CD4-positive, alpha-beta T cell (primary cell): ENCODE measurements at regions of chr11 and their contacts with region 1.

Region 1: DNA sequence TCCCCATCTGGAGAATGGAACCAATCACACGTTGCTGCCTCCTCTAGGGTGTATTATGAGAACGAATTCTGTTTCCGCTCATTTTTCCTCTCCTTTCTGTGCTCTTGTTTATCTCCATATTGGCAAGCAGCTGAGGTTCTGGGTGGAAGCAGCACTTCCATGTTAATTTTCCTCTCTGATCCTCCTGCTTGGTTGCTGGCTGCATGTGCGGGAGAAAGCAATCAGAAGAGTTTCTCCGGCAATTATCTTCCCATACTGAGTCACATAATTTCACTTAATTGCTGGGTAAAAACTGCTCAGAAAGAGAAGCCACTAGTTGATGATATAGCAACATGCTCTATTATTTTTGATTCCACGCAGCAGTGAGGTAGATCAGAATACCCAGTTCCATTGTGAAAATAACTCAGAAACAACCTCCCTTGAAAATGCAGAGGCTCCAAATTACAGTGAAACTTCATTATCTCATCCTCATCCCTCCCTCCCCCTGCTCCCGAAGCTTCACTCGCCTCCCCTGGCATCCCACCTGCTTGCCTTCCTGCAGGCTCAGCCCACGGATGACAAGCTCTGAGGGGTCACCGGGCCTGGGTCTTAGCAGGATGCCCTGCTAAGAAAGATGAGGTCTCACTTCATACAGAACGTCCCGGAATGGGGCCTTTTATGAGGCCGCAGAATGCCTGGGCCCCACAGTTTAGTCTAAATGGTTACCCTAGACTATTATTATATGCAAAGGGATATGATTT is 20.4 kb downstream of the FXYD6 start:
- DNase-seq: no peak
- ATAC-seq: no peak
- H3K4me3 ChIP-seq: no peak overlapping the region
- H3K4me3 Mint-ChIP-seq: no peak overlapping the region
- H3K27ac ChIP-seq: no peak overlapping the region
- H3K27ac Mint-ChIP-seq: no peak overlapping the region
- H3K4me1 ChIP-seq: no peaks in the 10 kb centered on the region
- H3K4me1 Mint-ChIP-seq: no peaks in the 10 kb centered on the region
- H3K27me3 ChIP-seq: no peaks in the 10 kb centered on the region
- H3K27me3 Mint-ChIP-seq: peaks cover 9% of the 10 kb centered on the region
- CTCF ChIP-seq: no peak

Region 2: DNA sequence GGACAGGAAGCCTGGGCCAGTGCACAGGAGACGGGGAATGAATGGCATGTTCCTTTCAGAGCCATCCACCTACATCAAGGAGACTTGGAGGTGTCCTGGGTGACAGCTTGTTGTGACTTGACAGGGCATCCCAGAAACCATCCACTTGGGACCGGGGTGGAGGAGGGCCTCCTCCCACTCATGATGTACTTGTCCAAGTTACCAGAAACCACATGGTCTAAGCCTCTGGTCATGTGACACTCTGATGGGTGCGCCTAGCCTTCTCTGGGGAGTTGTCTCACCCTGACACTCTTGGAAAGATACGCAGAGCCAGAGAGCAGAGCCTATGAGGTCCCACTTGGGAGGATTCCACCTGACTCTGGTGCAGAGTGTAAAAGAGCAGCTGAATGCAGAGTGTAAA is 42.0 kb after region 1 on chr11:
- CTCF ChIA-PET with region 1: no interaction called
- POLR2A ChIA-PET with region 1: no interaction called
- intact Hi-C with region 1: loop called in 1 of 2 experiments (anchors 5 kb)
- DNase-seq: peak in 1 of 14 experiments; percentile 23
- ATAC-seq: no peak
- H3K4me3 ChIP-seq: no peak overlapping the region
- H3K4me3 Mint-ChIP-seq: no peak overlapping the region
- H3K27ac ChIP-seq: no peak overlapping the region
- H3K27ac Mint-ChIP-seq: no peak overlapping the region
- H3K4me1 ChIP-seq: peaks cover 6% of the 10 kb centered on the region
- H3K4me1 Mint-ChIP-seq: no peaks in the 10 kb centered on the region
- H3K27me3 ChIP-seq: peaks cover 0 to 5% of the 10 kb centered on the region in 2 experiments
- H3K27me3 Mint-ChIP-seq: no peaks in the 10 kb centered on the region
- CTCF ChIP-seq: no peak